Heart left ventricle (tissue), 16 donors: ENCODE measurements at regions of chr14 and their contacts with region 1.

Region 1: GRCh38 chr14:73741386-73741875 is 27.2 kb upstream of the PNMA1 start:
- DNase-seq: peak; percentile 83 to 89 (median 85)
- ATAC-seq: peak; percentile 60 to 89 (median 78)
- H3K4me3 ChIP-seq: peak overlapping the region in 9 of 12 donors; percentile 7 to 48 (median 28)
- H3K27ac ChIP-seq: peak overlapping the region; percentile 61 to 100 (median 82)
- H3K4me1 ChIP-seq: peaks cover 52 to 83% (median 80%) of the 10 kb centered on the region in 12 donors
- H3K27me3 ChIP-seq: no peaks in the 10 kb centered on the region
- CTCF ChIP-seq: no peak
- POLR2A ChIP-seq: no peak

Region 2: GRCh38 chr14:73712540-73713171 is 28.8 kb before region 1 on chr14:
- intact Hi-C with region 1: no loop called
- DNase-seq: peak in 1 of 5 donors; percentile 22
- ATAC-seq: peak in 3 of 4 donors; percentile 5 to 34 (median 18)
- H3K4me3 ChIP-seq: peak overlapping the region; percentile 69 to 94 (median 86)
- H3K27ac ChIP-seq: peak overlapping the region in 9 of 12 donors; percentile 13 to 96 (median 91)
- H3K4me1 ChIP-seq: peaks cover 0 to 40% (median 26%) of the 10 kb centered on the region in 12 donors
- H3K27me3 ChIP-seq: no peaks in the 10 kb centered on the region
- CTCF ChIP-seq: no peak
- POLR2A ChIP-seq: no peak

Region 3: DNA sequence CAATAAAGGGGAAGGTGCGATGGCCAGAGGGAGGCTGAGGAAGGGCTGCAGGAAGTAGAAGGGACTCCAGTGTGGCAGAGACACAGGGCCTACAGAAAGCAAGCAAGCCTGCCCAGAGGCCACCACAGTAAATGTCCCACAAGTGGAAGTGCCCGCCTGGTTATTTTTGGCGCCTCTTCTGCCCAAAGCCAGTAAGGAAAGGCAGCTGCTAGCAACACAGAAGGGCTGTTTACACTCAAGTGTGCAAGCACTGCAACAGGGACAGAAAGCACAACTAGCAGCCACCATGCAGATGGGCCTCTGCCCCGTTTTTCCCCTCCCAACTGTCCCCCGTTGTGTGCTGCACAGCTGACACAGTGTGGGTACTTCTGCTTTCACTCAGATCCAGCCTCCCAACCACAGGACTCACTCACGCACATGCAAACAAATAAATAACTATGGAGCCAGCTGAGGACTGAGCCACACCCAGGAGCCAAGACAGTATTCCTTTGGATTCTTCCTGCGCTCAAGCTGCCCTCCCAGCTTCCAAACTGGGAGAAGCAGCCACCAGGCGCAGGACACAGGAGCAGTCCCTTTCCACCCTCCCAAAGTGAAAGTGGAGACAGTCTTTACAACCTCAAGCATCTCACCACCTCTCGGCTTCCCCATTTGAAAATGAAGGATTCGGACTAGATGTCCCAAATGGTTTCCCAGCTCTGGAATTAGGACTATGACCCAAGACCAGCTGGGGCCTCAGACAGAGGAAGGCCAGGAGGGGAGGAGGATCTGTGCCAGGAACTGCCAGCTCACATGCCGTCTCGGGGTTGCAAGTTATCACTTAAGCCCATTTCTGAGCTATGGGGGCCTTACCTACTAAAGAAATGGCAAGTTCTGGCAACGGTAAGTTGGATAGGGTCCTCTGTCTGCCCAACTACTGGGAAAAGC is 12.8 kb after region 1 on chr14:
- intact Hi-C with region 1: loop called in 2 of 10 experiments (anchors 2 kb)
- DNase-seq: peak in 2 of 5 donors; percentile 53 to 73
- ATAC-seq: peak; percentile 7 to 45 (median 20)
- H3K4me3 ChIP-seq: peak overlapping the region in 10 of 12 donors; percentile 6 to 46 (median 23)
- H3K27ac ChIP-seq: peak overlapping the region; percentile 84 to 100 (median 94)
- H3K4me1 ChIP-seq: peaks cover 60 to 100% (median 97%) of the 10 kb centered on the region in 12 donors
- H3K27me3 ChIP-seq: no peaks in the 10 kb centered on the region
- CTCF ChIP-seq: no peak
- POLR2A ChIP-seq: no peak

Region 4: GRCh38 chr14:73759714-73760597 is 18.5 kb after region 1 on chr14:
- intact Hi-C with region 1: loop called in 2 of 10 experiments (anchors 2 kb)
- DNase-seq: peak; percentile 96 to 97 (median 97)
- ATAC-seq: peak; percentile 55 to 89 (median 86)
- H3K4me3 ChIP-seq: peak overlapping the region; percentile 64 to 95 (median 79)
- H3K27ac ChIP-seq: peak overlapping the region; percentile 89 to 100 (median 98)
- H3K4me1 ChIP-seq: peaks cover 34 to 96% (median 86%) of the 10 kb centered on the region in 12 donors
- H3K27me3 ChIP-seq: no peaks in the 10 kb centered on the region
- CTCF ChIP-seq: peak in 3 of 12 donors; percentile 8 to 32 (median 32)
- POLR2A ChIP-seq: peak in 1 of 2 donors; percentile 68

Region 5: GRCh38 chr14:73825551-73826188 is 84.2 kb after region 1 on chr14:
- intact Hi-C with region 1: loop called in 2 of 10 experiments (anchors 5 kb)
- DNase-seq: peak; percentile 88 to 95 (median 92)
- ATAC-seq: peak; percentile 90 to 98 (median 96)
- H3K4me3 ChIP-seq: no peak overlapping the region
- H3K27ac ChIP-seq: peak overlapping the region in 1 of 12 donors; percentile 10
- H3K4me1 ChIP-seq: peaks cover 0 to 21% (median 7%) of the 10 kb centered on the region in 12 donors
- H3K27me3 ChIP-seq: no peaks in the 10 kb centered on the region
- CTCF ChIP-seq: peak; percentile 85 to 98 (median 94)
- POLR2A ChIP-seq: no peak